Calu3 (cell line): ENCODE measurements at regions of chr2 and their contacts with region 1.

Region 1: GRCh38 chr2:2229626-2230432 is 101.2 kb downstream of the MYT1L start:
- DNase-seq: no peak
- H3K4me3 Mint-ChIP-seq: no peak overlapping the region
- H3K27ac Mint-ChIP-seq: no peak overlapping the region
- H3K4me1 Mint-ChIP-seq: no peaks in the 10 kb centered on the region
- H3K27me3 Mint-ChIP-seq: no peaks in the 10 kb centered on the region
- CTCF ChIP-seq: no peak

Region 2: GRCh38 chr2:2178921-2179320 is 50.9 kb before region 1 on chr2:
- CTCF ChIA-PET with region 1: interaction called, 13 read pairs
- intact Hi-C with region 1: no loop called
- DNase-seq: no peak
- H3K4me3 Mint-ChIP-seq: no peak overlapping the region
- H3K27ac Mint-ChIP-seq: no peak overlapping the region
- H3K4me1 Mint-ChIP-seq: no peaks in the 10 kb centered on the region
- H3K27me3 Mint-ChIP-seq: no peaks in the 10 kb centered on the region
- CTCF ChIP-seq: no peak